Activated CD8-positive, alpha-beta memory T cell treated with anti-CD3 and anti-CD28 coated beads, Interleukin-2, amount 10 ng/mL, durations not matched to agents 7 days and 5 days (primary cell): ENCODE measurements at regions of chr12 and their contacts with region 1.

Region 1: GRCh38 chr12:9906873-9907272 is 25.3 kb downstream of the CLEC2A start:
- DNase-seq: peak; percentile 73
- ATAC-seq: peak; percentile 96
- H3K4me3 Mint-ChIP-seq: peak overlapping the region; percentile 21
- H3K27ac Mint-ChIP-seq: peak overlapping the region; percentile 85
- H3K4me1 Mint-ChIP-seq: peaks cover 35% of the 10 kb centered on the region
- H3K27me3 Mint-ChIP-seq: no peaks in the 10 kb centered on the region

Region 2: GRCh38 chr12:9895215-9895971 is 11.5 kb before region 1 on chr12:
- CTCF ChIA-PET with region 1: interaction called, 14 read pairs
- DNase-seq: no peak
- ATAC-seq: no peak
- H3K4me3 Mint-ChIP-seq: no peak overlapping the region
- H3K27ac Mint-ChIP-seq: no peak overlapping the region
- H3K4me1 Mint-ChIP-seq: peaks cover 13% of the 10 kb centered on the region
- H3K27me3 Mint-ChIP-seq: peaks cover 4% of the 10 kb centered on the region

Region 3: DNA sequence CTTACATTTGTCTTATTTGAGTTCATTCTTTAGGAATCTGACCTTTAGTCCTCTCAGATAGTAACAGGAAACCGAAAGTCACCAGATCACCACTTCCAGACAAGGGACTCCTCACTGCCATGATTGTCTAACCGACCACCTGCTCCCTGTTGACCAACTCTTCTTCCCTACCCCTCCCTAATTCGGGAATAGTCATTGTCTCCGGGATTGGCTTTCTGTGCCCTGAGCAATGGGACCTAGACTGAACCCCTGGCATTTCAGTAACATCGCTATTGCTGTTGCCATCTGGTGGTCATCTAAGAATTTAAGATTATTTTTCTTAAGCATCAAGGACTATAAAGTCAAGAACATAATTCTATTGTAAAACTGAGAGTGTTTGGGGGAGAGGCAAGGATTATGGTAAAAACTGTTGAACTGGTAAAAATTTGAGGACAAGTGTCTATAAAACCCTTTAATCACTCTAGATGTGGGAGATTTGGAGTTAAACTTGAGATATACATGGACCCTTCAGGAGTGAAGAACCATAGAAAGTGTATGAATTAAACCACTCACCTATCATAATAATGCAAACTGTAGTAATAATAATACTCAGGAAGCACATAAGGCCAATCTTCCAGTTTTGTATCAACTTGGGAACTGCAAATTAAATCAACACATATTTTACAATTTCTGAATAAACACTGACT is 19.0 kb after region 1 on chr12:
- CTCF ChIA-PET with region 1: interaction called, 12 read pairs
- DNase-seq: peak; percentile 45
- ATAC-seq: peak; percentile 68
- H3K4me3 Mint-ChIP-seq: peak overlapping the region; percentile 62
- H3K27ac Mint-ChIP-seq: peak overlapping the region; percentile 83
- H3K4me1 Mint-ChIP-seq: peaks cover 24% of the 10 kb centered on the region
- H3K27me3 Mint-ChIP-seq: peaks cover 9% of the 10 kb centered on the region

Region 4: DNA sequence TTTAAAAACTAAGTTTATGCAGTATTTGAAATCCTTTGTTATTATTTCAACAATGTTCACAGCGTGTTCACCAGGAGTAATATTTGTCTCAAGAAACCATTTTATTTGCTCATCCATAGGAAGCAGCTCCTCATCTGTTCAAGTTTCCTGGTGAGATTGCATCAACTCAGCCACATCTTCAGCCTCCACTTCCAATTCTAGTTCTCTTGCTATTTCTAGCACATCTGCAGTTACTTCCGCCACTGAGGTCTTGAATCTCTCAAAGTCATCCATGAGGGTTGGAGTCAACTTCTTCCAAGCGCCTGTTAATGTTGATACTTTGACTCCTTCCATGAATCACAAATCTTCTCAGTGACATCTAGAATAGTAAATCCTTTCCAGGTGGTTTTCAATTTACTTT is 141.7 kb after region 1 on chr12:
- CTCF ChIA-PET with region 1: no interaction called
- DNase-seq: no peak
- ATAC-seq: no peak
- H3K4me3 Mint-ChIP-seq: no peak overlapping the region
- H3K27ac Mint-ChIP-seq: no peak overlapping the region
- H3K4me1 Mint-ChIP-seq: peaks cover 14% of the 10 kb centered on the region
- H3K27me3 Mint-ChIP-seq: peaks cover 51% of the 10 kb centered on the region

Region 5: DNA sequence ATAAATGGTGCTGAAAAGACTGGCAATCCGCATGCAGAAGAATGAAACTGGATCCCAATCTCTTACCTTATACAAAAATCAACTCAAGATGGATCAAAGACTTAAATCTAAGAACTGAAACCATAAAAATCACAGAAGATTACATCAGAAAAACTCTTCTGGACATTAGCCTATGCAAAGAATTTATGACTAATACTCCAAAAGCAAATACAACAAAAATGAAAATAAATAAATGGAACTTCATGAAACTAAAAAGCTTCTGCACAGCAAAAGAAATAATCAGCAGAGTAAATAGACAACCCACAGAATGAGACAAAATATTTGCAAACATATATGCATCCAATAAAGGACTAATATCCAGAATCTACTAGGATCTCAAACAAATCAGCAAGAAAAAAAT is 206.2 kb after region 1 on chr12:
- CTCF ChIA-PET with region 1: no interaction called
- DNase-seq: no peak
- ATAC-seq: no peak
- H3K4me3 Mint-ChIP-seq: no peak overlapping the region
- H3K27ac Mint-ChIP-seq: no peak overlapping the region
- H3K4me1 Mint-ChIP-seq: no peaks in the 10 kb centered on the region
- H3K27me3 Mint-ChIP-seq: peaks cover 15% of the 10 kb centered on the region